HCT116 (cell line): ENCODE measurements at regions of chr9 and their contacts with region 1.

Region 1: DNA sequence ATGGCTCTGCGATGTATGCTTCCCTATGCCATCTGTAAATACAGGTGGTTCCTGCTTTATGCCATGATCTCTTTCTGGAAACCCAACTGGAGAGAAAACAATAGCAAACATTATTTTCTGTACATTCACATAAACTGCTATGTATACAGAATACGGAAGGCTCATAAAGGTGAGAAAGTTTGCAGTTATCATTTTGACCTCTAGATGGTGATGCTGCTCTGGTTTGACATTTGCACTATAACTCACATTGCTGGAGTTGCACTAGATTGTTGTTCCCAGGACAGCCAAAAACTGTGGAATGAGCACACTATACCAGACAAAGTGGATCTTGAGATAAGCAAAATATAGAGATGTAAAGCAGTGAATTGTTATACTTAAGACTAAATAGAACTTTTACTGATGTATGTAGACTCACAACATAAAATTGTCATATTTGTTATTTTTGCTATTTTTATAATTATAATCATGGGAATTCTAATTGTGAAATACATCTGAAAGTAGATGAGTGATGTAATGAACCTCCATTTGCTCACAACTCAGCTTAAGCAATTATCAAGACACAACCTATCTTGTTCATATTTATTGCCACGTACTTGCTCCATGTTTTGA is 246.5 kb downstream of the PTPRD start:
- DNase-seq: peak; percentile 2
- ATAC-seq: no peak; the same call in 1 of the 2 replicates
- H3K4me3 ChIP-seq: no peak overlapping the region
- H3K27ac ChIP-seq: no peak overlapping the region
- H3K4me1 ChIP-seq: no peaks in the 10 kb centered on the region
- H3K27me3 ChIP-seq: no peaks in the 10 kb centered on the region
- CTCF ChIP-seq: peak in 2 of 3 experiments; percentile 32 to 59; a peak in 4 of 6 replicates
- POLR2A ChIP-seq: no peak
- RAD21 ChIP-seq: peak; percentile 38

Region 2: DNA sequence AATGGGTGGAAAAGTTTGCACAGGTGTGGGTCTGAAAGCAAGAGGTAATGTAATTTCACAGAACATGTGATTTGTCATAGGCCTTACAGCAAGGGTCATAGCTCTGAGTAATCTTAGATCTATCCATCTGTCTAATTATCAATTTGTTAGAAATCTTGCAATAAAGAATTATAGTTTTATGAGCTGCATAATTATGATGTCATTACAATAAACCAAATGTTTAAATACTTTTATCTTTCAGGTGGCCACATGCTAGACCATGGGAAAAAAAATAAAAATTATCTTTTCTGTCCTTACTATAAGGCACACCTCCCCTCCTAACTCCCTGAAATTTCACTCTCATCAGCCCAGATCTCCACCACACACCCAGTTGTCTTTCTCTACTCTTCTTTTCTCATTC is 19.5 kb before region 1 on chr9:
- CTCF ChIA-PET with region 1: no interaction called
- POLR2A ChIA-PET with region 1: no interaction called
- RAD21 ChIA-PET with region 1: no interaction called
- intact Hi-C with region 1: loop called (anchors 1 kb)
- DNase-seq: no peak
- ATAC-seq: no peak
- H3K4me3 ChIP-seq: no peak overlapping the region
- H3K27ac ChIP-seq: no peak overlapping the region
- H3K4me1 ChIP-seq: no peaks in the 10 kb centered on the region
- H3K27me3 ChIP-seq: no peaks in the 10 kb centered on the region
- CTCF ChIP-seq: no peak
- POLR2A ChIP-seq: no peak
- RAD21 ChIP-seq: no peak

Region 3: GRCh38 chr9:10403283-10403682 is 37.0 kb after region 1 on chr9:
- CTCF ChIA-PET with region 1: no interaction called
- POLR2A ChIA-PET with region 1: no interaction called
- RAD21 ChIA-PET with region 1: no interaction called
- intact Hi-C with region 1: no loop called
- DNase-seq: no peak
- ATAC-seq: no peak
- H3K4me3 ChIP-seq: no peak overlapping the region
- H3K27ac ChIP-seq: no peak overlapping the region
- H3K4me1 ChIP-seq: no peaks in the 10 kb centered on the region
- H3K27me3 ChIP-seq: no peaks in the 10 kb centered on the region
- CTCF ChIP-seq: no peak
- POLR2A ChIP-seq: no peak
- RAD21 ChIP-seq: no peak

Region 4: DNA sequence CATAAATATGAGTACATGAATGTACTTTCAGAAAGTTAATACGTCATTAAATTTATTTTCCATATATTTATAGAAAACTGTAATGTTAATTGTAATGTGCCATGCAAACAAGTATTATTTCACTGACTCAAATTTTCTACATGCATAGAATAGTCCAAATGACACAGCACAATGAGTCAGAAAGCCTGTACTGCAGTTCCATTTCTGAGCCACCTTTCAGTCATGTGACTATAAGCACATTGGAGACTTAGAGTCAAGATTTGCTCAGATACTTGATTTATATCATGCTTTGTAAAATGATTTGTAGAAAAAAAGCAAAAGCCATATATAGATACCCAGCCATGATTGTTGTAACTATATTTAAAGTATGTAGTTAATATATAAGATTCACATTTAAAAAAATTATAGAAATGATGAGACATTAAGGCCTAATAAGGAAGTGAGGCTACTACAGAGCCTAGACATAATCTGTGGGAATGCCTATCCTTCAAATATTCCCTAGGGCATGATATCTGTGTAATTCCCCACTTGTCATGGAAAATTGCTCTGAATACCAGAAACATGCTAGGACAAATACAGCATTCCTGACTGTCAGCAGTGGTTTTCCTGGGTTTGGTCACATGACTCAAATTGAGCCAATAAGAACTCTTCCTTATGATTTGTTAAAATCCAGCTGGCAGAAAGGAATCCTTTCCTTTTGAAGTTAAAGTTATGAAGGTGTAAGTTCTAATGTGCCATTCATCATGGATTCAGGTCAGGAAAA is 196.5 kb after region 1 on chr9:
- CTCF ChIA-PET with region 1: no interaction called
- POLR2A ChIA-PET with region 1: no interaction called
- RAD21 ChIA-PET with region 1: no interaction called
- intact Hi-C with region 1: no loop called
- DNase-seq: no peak
- ATAC-seq: no peak
- H3K4me3 ChIP-seq: no peak overlapping the region
- H3K27ac ChIP-seq: no peak overlapping the region
- H3K4me1 ChIP-seq: no peaks in the 10 kb centered on the region
- H3K27me3 ChIP-seq: no peaks in the 10 kb centered on the region
- CTCF ChIP-seq: no peak
- POLR2A ChIP-seq: no peak
- RAD21 ChIP-seq: no peak